ENCODE measurements at regions of chr13 and their contacts with region 1.

Region 1: DNA sequence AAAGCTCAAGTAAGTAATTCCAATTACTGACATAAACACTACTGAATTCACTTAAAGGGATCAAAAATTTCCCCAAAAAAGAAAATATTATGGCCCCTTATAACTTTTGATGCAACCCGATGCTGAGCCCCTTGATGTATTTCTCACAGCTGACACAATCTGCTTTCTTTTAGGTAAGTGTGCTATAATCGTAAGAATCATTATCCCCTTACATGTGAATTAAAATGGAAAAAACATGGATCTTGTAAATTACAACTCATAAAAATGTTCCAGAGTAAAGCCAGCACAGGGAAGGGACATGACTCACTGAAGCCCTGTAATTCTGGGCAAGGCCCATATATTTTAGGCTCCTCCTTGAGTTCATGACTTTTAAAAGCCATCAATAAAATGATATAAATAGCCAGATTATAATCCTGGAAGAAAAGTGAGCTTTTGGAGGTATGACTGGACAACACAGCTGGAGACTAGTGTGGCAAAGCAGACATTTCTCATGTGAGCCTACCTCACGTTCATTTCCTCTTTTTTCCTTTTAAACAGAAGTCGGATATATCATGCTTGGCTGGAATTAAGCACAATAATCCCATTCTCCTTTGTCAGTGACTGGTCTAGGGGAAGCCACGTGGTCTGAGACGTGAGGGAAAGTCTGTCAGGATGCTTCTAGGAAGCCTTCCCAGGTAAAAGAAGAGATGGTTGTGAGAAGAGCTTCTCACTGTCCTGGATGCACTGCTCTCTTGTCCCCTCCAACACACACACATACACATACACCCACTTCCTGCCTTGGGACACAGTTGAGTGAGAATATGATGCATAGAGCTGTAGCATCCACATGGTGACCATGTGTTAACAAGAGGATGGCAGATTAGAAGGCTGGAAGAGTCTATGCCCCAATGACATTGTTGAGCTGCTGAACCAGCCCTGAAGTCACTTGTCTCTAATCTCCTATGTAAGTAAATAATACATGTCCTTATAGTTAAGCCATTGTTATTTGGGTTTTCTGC is 165.4 kb downstream of the RGCC start:
- DNase-seq: peak in 1 of 2 donors; percentile 69
- H3K4me3 ChIP-seq: no peak overlapping the region
- H3K27ac ChIP-seq: peak overlapping the region; percentile 86 to 89
- H3K4me1 ChIP-seq: peaks cover 4 to 12% of the 10 kb centered on the region in 2 donors
- H3K27me3 ChIP-seq: no peaks in the 10 kb centered on the region
- CTCF ChIP-seq: no peak

Region 2: DNA sequence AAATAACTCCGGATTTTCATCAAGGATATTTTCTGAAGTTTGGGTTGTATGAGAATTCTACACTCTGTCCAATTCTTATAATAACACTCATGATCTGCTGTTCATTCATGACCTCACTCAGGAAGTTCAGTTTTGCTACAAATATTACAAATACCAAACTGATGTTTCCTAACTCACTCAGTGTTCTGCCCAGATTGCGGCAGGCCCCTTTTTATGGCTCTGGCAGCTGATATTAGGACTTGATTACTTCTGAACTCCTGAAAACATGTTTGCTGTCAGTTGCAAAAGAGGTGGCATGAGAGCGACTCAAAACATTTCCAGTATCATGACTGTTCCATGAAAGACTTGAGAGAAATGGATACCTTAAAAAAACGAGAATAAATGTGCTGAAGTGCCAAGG is 22.6 kb after region 1 on chr13:
- intact Hi-C with region 1: loop called (anchors 1 kb)
- DNase-seq: peak in 1 of 2 donors; percentile 89
- H3K4me3 ChIP-seq: no peak overlapping the region
- H3K27ac ChIP-seq: peak overlapping the region; percentile 68 to 70
- H3K4me1 ChIP-seq: peaks cover 6 to 50% of the 10 kb centered on the region in 2 donors
- H3K27me3 ChIP-seq: no peaks in the 10 kb centered on the region
- CTCF ChIP-seq: no peak

Region 3: DNA sequence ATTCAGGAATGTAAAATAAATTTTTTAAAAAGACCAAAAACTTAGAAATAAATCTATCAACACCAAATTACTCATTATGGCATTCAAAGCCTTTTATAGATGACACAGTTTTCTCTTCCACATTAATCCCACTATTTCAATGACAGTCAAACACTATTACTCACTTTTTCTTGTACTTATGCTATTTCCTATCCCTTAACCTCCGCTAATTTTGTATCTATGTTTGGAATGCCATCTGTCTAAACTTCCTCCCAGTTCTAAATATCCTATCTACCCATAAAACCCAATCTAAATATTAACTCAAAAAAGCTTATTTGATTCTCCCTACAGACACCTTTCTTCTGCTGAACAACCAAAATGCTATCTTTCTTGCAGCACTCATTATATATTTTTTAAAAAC is 1960.6 kb after region 1 on chr13:
- intact Hi-C with region 1: no loop called
- DNase-seq: no peak
- H3K4me3 ChIP-seq: no peak overlapping the region
- H3K27ac ChIP-seq: no peak overlapping the region
- H3K4me1 ChIP-seq: no peaks in the 10 kb centered on the region
- H3K27me3 ChIP-seq: no peaks in the 10 kb centered on the region
- CTCF ChIP-seq: no peak

Measured in ascending aorta (tissue), 2 donors.